ENCODE measurements at regions of chr5 and their contacts with region 1.

Region 1: DNA sequence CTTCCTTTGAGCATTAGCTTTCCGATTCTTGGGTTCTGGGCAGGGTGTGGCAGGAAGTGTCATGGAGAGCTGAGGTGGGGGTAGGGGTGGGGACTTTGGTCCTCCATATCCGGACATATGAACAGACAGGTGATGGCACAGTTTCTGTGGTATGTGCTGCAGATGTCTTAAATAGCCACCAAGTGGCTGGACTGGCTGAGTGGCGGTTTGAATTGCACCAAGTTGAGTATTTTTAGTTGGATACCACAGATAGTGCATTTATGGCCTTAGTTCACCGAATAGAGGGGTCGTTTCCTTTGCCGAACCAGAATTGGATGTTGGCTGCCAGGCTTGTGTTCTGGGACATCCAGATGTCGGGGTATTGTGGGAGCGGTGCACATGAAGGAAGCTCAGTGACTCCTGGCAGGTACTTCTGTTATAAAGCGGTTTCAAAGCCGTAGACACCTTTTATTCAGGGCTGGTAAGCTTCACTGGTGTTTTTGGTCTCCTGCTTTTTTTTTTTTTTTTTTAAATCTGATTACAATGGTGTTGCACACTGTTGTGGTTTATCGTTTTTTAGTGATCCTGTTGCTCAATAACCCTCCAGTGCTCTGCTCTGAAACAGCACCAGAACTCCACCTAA is 15.1 kb upstream of the TNFAIP8 start:
- H3K4me3 Mint-ChIP-seq: peak overlapping the region; percentile 44
- H3K27ac Mint-ChIP-seq: peak overlapping the region; percentile 81
- H3K4me1 Mint-ChIP-seq: peaks cover 85% of the 10 kb centered on the region
- H3K27me3 Mint-ChIP-seq: no peaks in the 10 kb centered on the region

Region 2: GRCh38 chr5:119322948-119323537 is 17.7 kb before region 1 on chr5:
- intact Hi-C with region 1: loop called (anchors 2 kb)
- H3K4me3 Mint-ChIP-seq: no peak overlapping the region
- H3K27ac Mint-ChIP-seq: peak overlapping the region; percentile 77
- H3K4me1 Mint-ChIP-seq: peaks cover 80% of the 10 kb centered on the region
- H3K27me3 Mint-ChIP-seq: no peaks in the 10 kb centered on the region